GM12878 (cell line): ENCODE measurements at regions of chr17 and their contacts with region 1.

Region 1: DNA sequence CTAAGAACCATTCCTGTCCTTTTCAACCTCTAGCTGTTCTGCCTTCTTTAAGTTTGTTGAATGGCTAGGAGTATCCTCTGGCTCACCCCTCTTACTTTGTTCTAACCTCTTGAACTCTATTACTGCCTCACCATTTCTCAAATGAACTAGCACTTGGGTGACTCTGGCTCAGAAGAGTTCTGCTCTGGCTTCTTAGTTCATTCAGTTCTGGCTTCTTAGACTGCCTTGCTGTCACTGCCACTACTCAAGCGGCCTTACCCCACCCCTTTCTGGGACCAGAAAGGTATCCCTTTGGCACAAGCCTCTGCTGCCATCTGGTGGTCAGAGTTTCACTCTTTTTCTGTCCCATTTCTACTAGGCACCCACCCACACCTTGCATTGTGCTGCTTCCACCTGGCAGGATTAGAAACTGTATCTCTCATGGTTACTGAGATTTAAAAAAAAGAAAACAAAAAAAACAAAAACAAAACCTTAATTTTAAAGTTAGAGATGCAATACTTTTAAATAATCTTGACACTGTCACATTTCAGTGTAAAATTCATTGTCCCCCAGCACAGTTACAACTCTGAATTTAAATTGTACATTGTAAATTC is 6.8 kb upstream of the ABCA10 start:
- DNase-seq: peak; percentile 79
- ATAC-seq: peak; percentile 100
- H3K4me3 ChIP-seq: no peak overlapping the region
- H3K27ac ChIP-seq: 0 out of 2 replicates have a peak overlapping the region, but pooled peaks have one; percentile 27
- H3K4me1 ChIP-seq: peaks cover 4% of the 10 kb centered on the region; the same call in 1 of the 2 replicates
- H3K27me3 ChIP-seq: no peaks in the 10 kb centered on the region
- CTCF ChIP-seq: peak; percentile 71 to 89 (median 83)
- EP300 ChIP-seq: no peak
- POLR2A ChIP-seq: no peak
- RAD21 ChIP-seq: peak; percentile 97

Region 2: DNA sequence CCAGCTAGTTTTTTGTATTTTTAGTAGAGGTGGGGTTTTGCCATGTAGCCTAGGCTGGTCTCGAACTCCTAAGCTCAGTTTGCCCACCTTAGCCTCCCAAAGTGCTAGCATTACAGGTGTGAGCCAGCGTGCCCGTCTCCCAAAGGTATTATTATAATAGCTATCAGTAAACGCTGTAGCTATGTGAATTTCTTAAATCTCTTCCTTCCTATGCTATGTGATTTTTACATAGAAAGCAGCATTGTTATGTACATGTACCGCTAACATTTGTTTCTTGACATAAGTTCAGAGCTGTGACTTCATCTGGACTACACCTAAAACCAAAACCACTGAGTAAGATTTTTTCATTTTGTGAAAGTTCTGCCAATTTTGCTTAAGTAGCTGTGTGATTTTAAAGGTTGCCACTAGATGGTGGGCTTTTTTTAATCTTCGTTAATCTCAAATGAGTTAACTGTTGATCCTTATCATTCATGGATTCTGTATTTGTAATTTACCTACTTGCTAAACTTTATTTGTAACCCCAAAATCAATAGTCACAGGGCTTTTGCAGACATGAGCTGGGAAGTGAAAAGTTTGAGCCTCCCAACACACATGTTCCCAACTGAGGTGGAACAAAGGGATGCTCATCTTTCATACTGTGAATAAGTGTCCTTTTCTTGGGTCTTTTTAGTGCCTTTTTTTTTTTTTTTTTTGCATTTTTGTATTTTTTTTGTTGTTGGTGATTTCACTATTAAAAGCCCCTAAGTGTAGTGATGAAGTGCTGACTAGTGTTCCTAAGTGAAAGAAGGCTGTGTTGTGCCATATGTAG is 701.3 kb before region 1 on chr17:
- CTCF ChIA-PET with region 1: no interaction called
- POLR2A ChIA-PET with region 1: no interaction called
- RAD21 ChIA-PET with region 1: no interaction called
- SMC1A ChIA-PET with region 1: no interaction called
- in situ Hi-C with region 1: loop called (anchors 10 kb)
- intact Hi-C with region 1: loop called (anchors 5 kb)
- DNase-seq: no peak
- ATAC-seq: no peak
- H3K4me3 ChIP-seq: no peak overlapping the region
- H3K27ac ChIP-seq: no peak overlapping the region
- H3K4me1 ChIP-seq: no peaks in the 10 kb centered on the region
- H3K27me3 ChIP-seq: no peaks in the 10 kb centered on the region
- CTCF ChIP-seq: peak in 2 of 3 experiments; percentile 20 to 23; a peak in 3 of 6 replicates
- EP300 ChIP-seq: no peak
- POLR2A ChIP-seq: no peak
- RAD21 ChIP-seq: no peak

Region 3: GRCh38 chr17:68777243-68777855 is 458.1 kb before region 1 on chr17:
- CTCF ChIA-PET with region 1: interaction called, 54 read pairs
- POLR2A ChIA-PET with region 1: interaction called, 3 read pairs
- RAD21 ChIA-PET with region 1: interaction called, 13 read pairs
- SMC1A ChIA-PET with region 1: interaction called, 29 read pairs
- in situ Hi-C with region 1: loop called (anchors 5 kb)
- intact Hi-C with region 1: loop called (anchors 1 kb)
- DNase-seq: no peak
- ATAC-seq: peak; percentile 75
- H3K4me3 ChIP-seq: no peak overlapping the region
- H3K27ac ChIP-seq: no peak overlapping the region
- H3K4me1 ChIP-seq: peaks cover 11% of the 10 kb centered on the region
- H3K27me3 ChIP-seq: no peaks in the 10 kb centered on the region
- CTCF ChIP-seq: peak; percentile 57 to 78 (median 64)
- EP300 ChIP-seq: no peak
- POLR2A ChIP-seq: no peak
- RAD21 ChIP-seq: peak; percentile 82

Region 4: GRCh38 chr17:68909066-68909465 is 326.4 kb before region 1 on chr17:
- CTCF ChIA-PET with region 1: interaction called, 4 read pairs
- POLR2A ChIA-PET with region 1: no interaction called
- RAD21 ChIA-PET with region 1: interaction called, 4 read pairs
- SMC1A ChIA-PET with region 1: interaction called, 5 read pairs
- in situ Hi-C with region 1: no loop called
- intact Hi-C with region 1: loop called (anchors 5 kb)
- DNase-seq: peak; percentile 16
- ATAC-seq: peak; percentile 81
- H3K4me3 ChIP-seq: no peak overlapping the region
- H3K27ac ChIP-seq: no peak overlapping the region
- H3K4me1 ChIP-seq: peaks cover 3% of the 10 kb centered on the region; the same call in 1 of the 2 replicates
- H3K27me3 ChIP-seq: no peaks in the 10 kb centered on the region
- CTCF ChIP-seq: no peak
- EP300 ChIP-seq: no peak
- POLR2A ChIP-seq: no peak
- RAD21 ChIP-seq: no peak

Region 5: DNA sequence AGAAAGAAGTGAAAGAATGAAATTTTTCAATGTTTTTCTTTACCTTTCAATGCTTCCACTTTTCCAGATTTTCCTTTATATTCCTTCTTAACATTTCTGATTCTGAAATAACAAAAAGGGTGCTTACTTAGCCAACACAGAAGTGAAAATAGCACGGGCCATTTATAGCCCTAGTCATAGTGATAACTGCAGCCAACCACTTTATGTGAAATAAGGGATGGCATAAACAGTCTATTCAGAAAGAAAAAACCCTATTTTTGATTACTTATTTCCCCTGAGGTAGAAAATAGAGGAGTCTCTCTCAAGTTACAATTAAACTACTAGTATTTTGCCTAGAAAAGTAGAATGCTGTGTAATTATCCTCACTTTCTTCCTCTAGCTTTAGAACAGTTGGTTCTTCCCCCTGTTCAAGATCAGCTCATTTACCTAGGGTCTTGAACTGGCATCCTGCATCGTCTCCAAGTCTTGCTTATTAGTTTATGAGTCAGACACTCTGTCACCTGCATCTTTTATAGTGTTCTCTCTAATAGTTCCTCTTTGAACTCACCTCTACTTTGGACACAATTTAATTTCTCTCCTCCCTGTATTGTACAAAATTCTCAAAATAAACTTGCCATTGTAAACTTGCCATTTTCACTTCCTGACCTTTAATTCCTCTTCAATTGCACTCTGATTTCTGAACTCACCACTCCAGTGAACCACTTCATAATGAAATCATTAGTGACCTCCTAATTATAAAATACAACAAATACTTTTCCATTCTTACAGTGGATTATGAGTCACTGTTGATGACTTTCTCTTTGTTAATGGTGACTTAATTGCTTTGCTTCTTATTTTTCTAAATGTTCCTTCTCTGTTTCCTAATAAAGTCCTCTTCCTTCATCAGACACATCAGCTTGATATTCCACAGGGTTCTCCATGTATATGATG is 117.3 kb before region 1 on chr17:
- CTCF ChIA-PET with region 1: interaction called, 5 read pairs
- POLR2A ChIA-PET with region 1: no interaction called
- RAD21 ChIA-PET with region 1: no interaction called
- SMC1A ChIA-PET with region 1: interaction called, 4 read pairs
- in situ Hi-C with region 1: no loop called
- intact Hi-C with region 1: loop called (anchors 2 kb)
- DNase-seq: peak; percentile 47
- ATAC-seq: peak; percentile 60
- H3K4me3 ChIP-seq: peak overlapping the region; percentile 27
- H3K27ac ChIP-seq: peak overlapping the region; percentile 93
- H3K4me1 ChIP-seq: peaks cover 22% of the 10 kb centered on the region
- H3K27me3 ChIP-seq: no peaks in the 10 kb centered on the region
- CTCF ChIP-seq: no peak
- EP300 ChIP-seq: peak; percentile 49 to 53; a peak in 3 of 4 replicates
- POLR2A ChIP-seq: no peak
- RAD21 ChIP-seq: no peak

Region 6: DNA sequence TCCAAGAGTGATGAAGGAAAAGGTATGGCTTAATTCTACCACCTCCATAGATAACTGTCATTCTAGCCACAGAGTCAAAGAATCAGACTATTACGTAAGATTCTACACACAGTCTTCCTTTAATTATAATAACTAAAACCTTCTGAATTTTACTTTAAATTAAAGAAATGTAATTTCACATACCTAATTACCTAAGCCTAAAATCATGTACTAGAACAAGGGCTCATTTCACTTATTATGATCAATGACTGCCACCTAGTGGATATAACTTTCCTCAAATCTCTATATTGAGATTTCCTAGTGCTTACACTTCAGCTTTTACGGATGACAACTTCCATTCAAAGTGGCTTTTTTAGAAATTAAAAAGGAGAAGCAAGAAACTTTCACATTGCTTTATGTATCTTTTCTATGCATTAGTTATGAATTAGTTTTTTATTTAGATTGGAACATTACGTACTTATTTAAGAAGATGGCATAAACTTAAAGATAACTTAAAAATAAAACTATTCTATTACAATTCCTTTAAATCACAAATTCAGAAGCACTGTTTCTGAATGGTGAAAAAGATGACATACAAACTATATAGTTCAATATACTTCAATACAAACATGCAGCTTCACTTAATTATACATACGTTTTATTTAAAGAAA is 11.4 kb after region 1 on chr17:
- CTCF ChIA-PET with region 1: interaction called, 18 read pairs
- POLR2A ChIA-PET with region 1: interaction called, 3 read pairs
- RAD21 ChIA-PET with region 1: interaction called, 6 read pairs
- SMC1A ChIA-PET with region 1: interaction called, 6 read pairs
- in situ Hi-C with region 1: no loop called
- intact Hi-C with region 1: no loop called
- DNase-seq: peak; percentile 25
- ATAC-seq: peak; percentile 85
- H3K4me3 ChIP-seq: no peak overlapping the region
- H3K27ac ChIP-seq: no peak overlapping the region
- H3K4me1 ChIP-seq: no peaks in the 10 kb centered on the region
- H3K27me3 ChIP-seq: no peaks in the 10 kb centered on the region
- CTCF ChIP-seq: peak; percentile 26 to 64 (median 44); a peak in 4 of 6 replicates
- EP300 ChIP-seq: no peak
- POLR2A ChIP-seq: no peak
- RAD21 ChIP-seq: peak; percentile 68